A673 (cell line): ENCODE measurements at regions of chr19 and their contacts with region 1.

Region 1: GRCh38 chr19:4139614-4140236 is 13.7 kb upstream of the CREB3L3 start:
- DNase-seq: peak; percentile 77
- H3K4me3 ChIP-seq: no peak overlapping the region
- H3K27ac ChIP-seq: no peak overlapping the region
- H3K4me1 ChIP-seq: no peaks in the 10 kb centered on the region
- H3K27me3 ChIP-seq: peaks cover under 1% of the 10 kb centered on the region
- CTCF ChIP-seq: peak; percentile 91

Region 2: GRCh38 chr19:4065430-4066175 is 74.1 kb before region 1 on chr19:
- CTCF ChIA-PET with region 1: interaction called, 11 read pairs
- POLR2A ChIA-PET with region 1: no interaction called
- intact Hi-C with region 1: no loop called
- DNase-seq: peak; percentile 98
- H3K4me3 ChIP-seq: peak overlapping the region; percentile 90
- H3K27ac ChIP-seq: peak overlapping the region; percentile 95
- H3K4me1 ChIP-seq: peaks cover 11% of the 10 kb centered on the region
- H3K27me3 ChIP-seq: no peaks in the 10 kb centered on the region
- CTCF ChIP-seq: no peak

Region 3: DNA sequence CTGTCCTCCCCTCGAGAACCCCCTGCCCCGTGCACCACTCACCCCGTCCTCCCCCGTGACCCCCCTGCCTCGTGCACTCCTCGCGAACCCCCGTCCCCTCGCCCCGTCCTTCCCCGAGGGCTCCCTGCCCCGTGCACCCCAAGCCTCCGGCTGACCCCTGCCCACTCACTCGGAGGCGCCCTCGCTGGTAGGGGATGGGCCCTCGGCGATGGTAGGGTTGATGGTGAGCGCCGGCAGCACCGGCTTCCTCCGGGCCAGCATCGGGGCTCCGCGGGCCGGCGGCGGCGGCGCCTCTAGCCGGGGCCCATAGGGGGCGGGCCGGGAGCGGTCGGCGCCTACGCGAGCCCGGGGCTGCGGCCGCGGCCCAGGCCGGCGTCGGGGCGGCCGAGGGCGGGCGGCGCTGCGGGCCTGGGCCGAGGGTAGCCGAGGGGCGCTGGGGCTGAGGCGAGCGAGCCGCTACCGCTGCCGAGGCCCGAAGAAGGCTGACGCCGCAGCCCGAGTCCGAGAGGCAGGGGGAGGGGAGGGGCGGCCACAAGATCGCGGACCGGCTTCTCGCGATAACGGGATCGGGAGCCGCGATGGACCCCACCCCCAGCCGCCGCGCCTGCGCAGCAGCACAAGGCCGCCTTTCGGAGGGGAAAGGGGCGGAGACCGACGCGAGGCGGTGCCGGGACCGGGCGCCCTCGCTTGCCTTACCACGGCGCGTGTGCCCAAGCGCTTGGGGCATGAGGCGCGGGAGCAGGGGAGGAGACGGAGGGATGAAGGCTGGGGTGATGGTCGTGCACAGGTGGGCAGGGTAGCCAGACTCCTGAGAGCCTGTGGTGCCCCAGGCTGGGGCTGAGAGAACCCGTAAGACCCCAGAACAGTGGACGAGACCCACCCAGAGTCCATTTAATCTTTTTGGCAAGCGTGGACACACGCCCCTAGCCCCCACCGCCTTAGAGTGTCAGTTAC is 15.8 kb before region 1 on chr19 and contains the start of gene MAP2K2:
- CTCF ChIA-PET with region 1: no interaction called
- POLR2A ChIA-PET with region 1: no interaction called
- intact Hi-C with region 1: no loop called
- DNase-seq: peak; percentile 95
- H3K4me3 ChIP-seq: peak within 1 kb of the TSS; percentile 88
- H3K27ac ChIP-seq: peak within 1 kb of the TSS; percentile 81
- H3K4me1 ChIP-seq: peaks cover 8% of the 10 kb centered on the region
- H3K27me3 ChIP-seq: no peaks in the 10 kb centered on the region
- CTCF ChIP-seq: 0 out of 2 replicates have a peak, but pooled peaks have one; percentile 11
- total RNA-seq, gene MAP2K2: 185 and 198 TPM in 2 replicates

Region 4: DNA sequence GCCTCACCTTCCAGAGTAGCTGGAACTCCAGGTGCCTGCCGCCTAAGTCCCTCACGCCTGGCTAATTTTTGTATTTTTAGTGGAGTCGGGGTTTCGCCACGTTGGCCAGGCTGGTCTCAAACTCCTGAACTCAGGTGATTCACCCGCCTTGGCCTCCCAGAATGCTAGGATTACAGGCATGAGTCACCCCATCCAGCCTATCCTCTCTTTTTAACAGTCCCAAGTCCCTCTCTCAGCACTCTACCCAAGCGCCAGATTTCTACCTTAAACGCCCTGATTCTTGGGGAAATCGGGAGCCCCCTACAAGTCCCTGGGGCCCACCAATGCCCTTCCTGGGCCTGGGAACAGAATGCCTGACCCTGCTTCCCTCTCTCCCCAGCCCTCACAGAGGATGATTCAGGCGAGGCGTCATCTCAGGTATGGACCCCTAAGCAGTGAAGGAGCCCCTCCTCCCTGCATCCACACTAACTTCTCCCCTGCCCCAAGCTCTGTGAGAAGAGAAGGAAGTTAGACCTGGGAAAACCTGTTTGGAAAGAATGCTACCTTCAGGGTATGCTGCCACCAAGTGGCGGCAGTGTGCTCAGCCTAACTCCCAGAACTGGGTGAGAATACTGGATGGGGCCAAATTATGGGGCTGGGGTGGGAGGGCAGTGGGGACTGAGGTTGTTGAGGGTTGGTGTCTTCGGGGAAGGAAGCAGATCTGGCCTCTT is 68.8 kb after region 1 on chr19:
- CTCF ChIA-PET with region 1: interaction called, 3 read pairs
- POLR2A ChIA-PET with region 1: no interaction called
- intact Hi-C with region 1: loop called (anchors 10 kb)
- DNase-seq: peak; percentile 68
- H3K4me3 ChIP-seq: no peak overlapping the region
- H3K27ac ChIP-seq: no peak overlapping the region
- H3K4me1 ChIP-seq: no peaks in the 10 kb centered on the region
- H3K27me3 ChIP-seq: peaks cover 3% of the 10 kb centered on the region
- CTCF ChIP-seq: peak; percentile 63

Region 5: DNA sequence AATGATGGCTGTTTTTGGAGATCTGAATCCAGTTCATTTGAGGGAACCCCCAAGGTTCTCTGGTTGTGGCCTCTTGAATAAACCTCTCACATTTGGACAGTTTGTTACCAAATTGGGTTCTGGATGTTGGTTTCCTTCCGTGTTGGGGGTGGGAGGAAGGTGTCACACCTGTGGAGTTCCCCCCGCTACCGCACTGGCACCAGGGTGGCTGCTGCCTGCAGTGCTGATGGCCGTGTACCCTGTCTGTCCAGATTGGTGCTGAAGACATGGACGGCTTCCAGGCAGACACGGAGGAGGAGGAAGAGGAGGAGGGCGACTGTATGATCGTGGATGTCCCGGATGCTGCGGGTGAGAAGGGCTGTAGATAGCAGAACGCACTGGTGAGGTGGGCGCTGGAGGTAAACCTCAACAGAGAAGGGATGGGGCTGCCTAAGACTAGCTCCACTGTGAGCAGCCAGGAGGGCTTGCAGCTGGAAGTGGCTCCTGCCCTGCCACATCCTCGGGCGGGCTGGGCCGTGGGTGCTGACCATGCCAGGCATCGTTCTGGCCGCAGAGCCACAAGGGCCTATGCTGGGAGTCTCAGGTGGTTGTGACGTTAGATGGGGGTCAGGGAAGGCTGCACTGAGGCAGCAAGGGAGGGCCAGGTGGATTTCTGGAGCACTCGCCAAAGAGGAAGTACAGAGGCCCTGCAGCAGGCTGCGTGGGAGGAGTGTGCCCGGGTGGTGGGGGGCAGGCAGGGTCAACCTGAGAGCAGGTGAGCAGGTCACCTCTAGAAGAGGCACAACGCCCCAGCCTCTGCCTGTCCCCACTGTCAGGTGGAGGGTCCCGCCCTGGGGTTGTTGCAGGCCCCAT is 302.5 kb after region 1 on chr19:
- CTCF ChIA-PET with region 1: no interaction called
- POLR2A ChIA-PET with region 1: no interaction called
- intact Hi-C with region 1: no loop called
- DNase-seq: no peak
- H3K4me3 ChIP-seq: no peak overlapping the region
- H3K27ac ChIP-seq: no peak overlapping the region
- H3K4me1 ChIP-seq: no peaks in the 10 kb centered on the region
- H3K27me3 ChIP-seq: no peaks in the 10 kb centered on the region
- CTCF ChIP-seq: no peak